ENCODE measurements at regions of chr5 and their contacts with region 1.

Region 1: DNA sequence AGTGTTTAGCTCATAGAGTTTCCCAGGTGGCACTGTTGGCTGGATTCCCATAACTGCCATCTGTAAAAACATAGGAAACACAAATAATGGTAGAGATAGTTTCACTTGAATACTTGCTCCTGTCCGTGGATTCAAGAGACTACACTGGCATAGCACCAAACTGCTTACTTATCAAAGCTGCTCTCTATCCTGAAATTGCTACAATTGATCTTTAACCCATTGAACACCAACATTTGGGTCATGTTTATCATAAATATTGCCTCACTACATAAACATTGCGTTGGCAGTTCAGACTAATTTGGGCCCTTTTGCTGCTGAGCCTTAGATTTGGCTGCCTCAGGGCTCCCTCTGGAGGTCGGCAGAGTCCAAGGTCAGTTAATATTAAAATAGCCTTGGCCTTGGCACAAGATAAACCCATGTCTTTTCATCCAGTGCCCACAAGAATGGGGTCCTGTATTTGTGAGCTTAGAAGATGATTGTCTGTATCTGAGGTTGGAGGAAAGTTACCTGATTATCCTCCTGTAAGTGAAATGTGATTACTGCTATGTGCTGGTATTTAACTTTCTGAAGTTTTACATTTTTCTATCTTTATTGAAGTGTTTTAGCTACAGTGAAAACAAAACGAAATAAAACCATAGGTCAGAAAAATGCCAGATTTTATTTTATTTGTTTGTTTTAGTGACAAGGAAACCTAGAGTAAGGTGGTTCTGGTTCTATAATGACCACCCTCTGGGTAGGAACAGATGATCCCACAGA is 4.0 kb upstream of the RANBP3L start:
- DNase-seq: peak in 1 of 2 donors; percentile 78
- H3K4me3 ChIP-seq: no peak overlapping the region
- H3K27ac ChIP-seq: no peak overlapping the region
- H3K4me1 ChIP-seq: peaks cover 0 to 14% of the 10 kb centered on the region in 2 donors
- H3K27me3 ChIP-seq: no peaks in the 10 kb centered on the region
- CTCF ChIP-seq: peak; percentile 70 to 80 (median 74)

Region 2: GRCh38 chr5:36177715-36178523 is 127.8 kb before region 1 on chr5:
- intact Hi-C with region 1: loop called (anchors 5 kb)
- DNase-seq: no peak
- H3K4me3 ChIP-seq: no peak overlapping the region
- H3K27ac ChIP-seq: no peak overlapping the region
- H3K4me1 ChIP-seq: no peaks in the 10 kb centered on the region
- H3K27me3 ChIP-seq: no peaks in the 10 kb centered on the region
- CTCF ChIP-seq: peak in 2 of 3 experiments; percentile 53 to 59

Region 3: DNA sequence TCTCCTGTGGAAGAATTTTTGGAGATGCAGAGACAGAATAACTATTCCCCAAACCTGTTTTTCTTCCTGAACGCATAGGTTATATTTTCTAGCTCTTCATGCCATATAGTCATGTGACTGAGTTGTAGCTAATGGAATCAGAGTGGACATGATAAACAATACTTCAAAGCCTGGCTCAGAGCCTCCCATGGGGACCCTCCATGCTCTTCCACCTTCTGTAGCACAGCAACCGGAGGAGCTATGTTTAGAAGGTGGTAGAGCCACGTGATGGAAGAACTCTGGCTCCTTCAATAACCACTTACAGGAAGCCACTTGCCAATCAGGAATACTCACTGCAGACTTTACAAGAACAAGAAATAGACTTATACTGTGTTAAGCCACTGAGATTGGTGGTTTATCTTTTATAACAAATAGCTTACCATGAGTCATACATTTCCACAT is 103.2 kb before region 1 on chr5:
- intact Hi-C with region 1: no loop called
- DNase-seq: no peak
- H3K4me3 ChIP-seq: no peak overlapping the region
- H3K27ac ChIP-seq: no peak overlapping the region
- H3K4me1 ChIP-seq: no peaks in the 10 kb centered on the region
- H3K27me3 ChIP-seq: no peaks in the 10 kb centered on the region
- CTCF ChIP-seq: no peak

Region 4: DNA sequence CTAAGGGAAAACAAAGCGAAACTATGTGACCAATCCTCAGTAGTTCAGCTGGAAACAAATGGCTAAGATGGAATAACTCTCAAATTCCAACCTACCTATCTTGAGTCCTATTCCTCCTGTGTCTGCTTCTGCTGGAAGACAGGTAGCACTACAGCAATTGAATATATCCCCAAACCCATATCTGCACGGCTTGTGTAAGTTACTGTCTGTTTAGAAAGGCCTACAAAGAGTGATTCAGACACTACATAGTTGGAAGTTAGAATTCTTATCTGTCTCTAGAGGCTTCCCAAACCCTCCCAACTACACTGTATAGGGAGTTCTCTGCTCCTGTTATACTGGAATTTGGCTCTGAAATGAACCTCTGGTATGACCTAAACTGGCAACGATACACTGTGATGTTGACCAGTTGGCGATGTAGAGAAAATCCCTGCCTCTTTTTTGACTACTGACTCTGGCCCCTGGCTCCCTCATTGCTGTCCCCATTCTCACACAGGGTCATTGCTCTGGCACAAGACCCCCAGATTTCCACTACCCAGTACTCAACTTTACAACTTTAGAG is 41.5 kb before region 1 on chr5:
- intact Hi-C with region 1: loop called (anchors 1 kb)
- DNase-seq: no peak
- H3K4me3 ChIP-seq: no peak overlapping the region
- H3K27ac ChIP-seq: no peak overlapping the region
- H3K4me1 ChIP-seq: no peaks in the 10 kb centered on the region
- H3K27me3 ChIP-seq: no peaks in the 10 kb centered on the region
- CTCF ChIP-seq: no peak

Region 5: DNA sequence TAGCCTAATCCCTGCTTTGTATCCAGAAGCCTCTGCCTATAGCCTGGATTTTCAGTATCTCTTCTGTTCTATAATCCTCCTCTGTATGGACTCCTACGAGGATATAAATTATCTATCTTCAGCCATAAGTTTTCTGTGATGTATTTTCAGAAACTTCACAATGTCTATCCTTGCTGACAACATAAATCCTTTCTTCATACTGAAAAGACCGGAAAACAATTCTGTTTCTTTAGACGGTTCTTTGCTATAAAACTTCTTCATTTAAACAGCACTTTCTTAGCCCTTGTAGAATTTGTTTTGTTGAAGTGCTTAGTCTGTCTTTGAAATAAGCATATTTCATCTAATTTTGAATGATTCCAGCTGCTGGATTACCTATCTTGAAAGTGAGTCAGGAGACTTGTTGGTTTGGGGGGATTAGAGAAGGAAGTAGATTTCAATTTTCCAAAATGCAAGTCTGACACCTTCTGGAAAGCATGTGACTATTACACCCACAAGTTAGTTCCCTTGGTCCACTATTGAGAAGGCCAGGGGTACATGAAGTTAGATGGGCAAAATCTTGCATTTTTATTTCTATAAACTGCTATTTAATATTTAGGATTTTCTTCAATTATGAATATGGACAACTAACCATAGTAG is 92.3 kb after region 1 on chr5:
- intact Hi-C with region 1: loop called (anchors 5 kb)
- DNase-seq: no peak
- H3K4me3 ChIP-seq: no peak overlapping the region
- H3K27ac ChIP-seq: no peak overlapping the region
- H3K4me1 ChIP-seq: peaks cover 0 to 7% of the 10 kb centered on the region in 2 donors
- H3K27me3 ChIP-seq: no peaks in the 10 kb centered on the region
- CTCF ChIP-seq: peak in 1 of 3 experiments; percentile 40

Region 6: GRCh38 chr5:36701085-36701698 is 395.4 kb after region 1 on chr5:
- intact Hi-C with region 1: no loop called
- DNase-seq: no peak
- H3K4me3 ChIP-seq: no peak overlapping the region
- H3K27ac ChIP-seq: no peak overlapping the region
- H3K4me1 ChIP-seq: no peaks in the 10 kb centered on the region
- H3K27me3 ChIP-seq: no peaks in the 10 kb centered on the region
- CTCF ChIP-seq: no peak